A549 (cell line): ENCODE measurements at regions of chr2 and their contacts with region 1.

Region 1: GRCh38 chr2:15636972-15637785 is 45.5 kb downstream of the DDX1 start:
- DNase-seq: peak; percentile 73 to 77
- ATAC-seq: peak; percentile 90 to 94
- H3K4me3 ChIP-seq: no peak overlapping the region
- H3K27ac ChIP-seq: no peak overlapping the region
- H3K4me1 ChIP-seq: no peaks in the 10 kb centered on the region
- CTCF ChIP-seq: peak; percentile 100
- EP300 ChIP-seq: no peak
- POLR2A ChIP-seq: no peak
- RAD21 ChIP-seq: peak; percentile 98 to 100

Region 2: GRCh38 chr2:15448250-15448839 is 188.8 kb before region 1 on chr2:
- CTCF ChIA-PET with region 1: no interaction called
- POLR2A ChIA-PET with region 1: no interaction called
- DNase-seq: no peak
- ATAC-seq: no peak
- H3K4me3 ChIP-seq: no peak overlapping the region
- H3K27ac ChIP-seq: no peak overlapping the region
- H3K4me1 ChIP-seq: no peaks in the 10 kb centered on the region
- CTCF ChIP-seq: no peak
- EP300 ChIP-seq: no peak
- POLR2A ChIP-seq: no peak
- RAD21 ChIP-seq: no peak

Region 3: DNA sequence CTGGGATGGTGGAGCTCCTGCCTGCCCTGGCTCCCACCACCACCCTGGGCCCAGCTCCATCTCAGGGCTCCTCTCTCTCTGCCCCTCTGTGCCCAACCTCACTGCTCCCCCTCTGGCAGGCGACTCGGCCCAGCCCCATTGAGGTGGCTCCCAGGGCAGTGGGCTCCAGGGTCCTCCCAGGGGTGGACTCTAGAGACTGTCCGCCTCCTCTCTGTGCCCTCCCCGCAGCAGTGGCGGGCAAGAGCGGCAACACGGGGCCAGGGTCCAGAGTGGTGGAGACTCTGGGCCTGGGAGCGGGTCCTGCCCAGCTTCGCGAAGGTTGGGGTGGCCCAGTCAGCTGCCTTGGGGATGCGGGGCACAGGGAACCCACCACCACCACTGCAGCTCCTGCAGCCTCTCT is 18.1 kb before region 1 on chr2:
- CTCF ChIA-PET with region 1: interaction called, 15 read pairs
- POLR2A ChIA-PET with region 1: no interaction called
- DNase-seq: no peak
- ATAC-seq: peak; percentile 46 to 47; a peak in 3 of 6 replicates
- H3K4me3 ChIP-seq: no peak overlapping the region
- H3K27ac ChIP-seq: no peak overlapping the region
- H3K4me1 ChIP-seq: no peaks in the 10 kb centered on the region
- CTCF ChIP-seq: no peak
- EP300 ChIP-seq: no peak
- POLR2A ChIP-seq: no peak
- RAD21 ChIP-seq: no peak

Region 4: DNA sequence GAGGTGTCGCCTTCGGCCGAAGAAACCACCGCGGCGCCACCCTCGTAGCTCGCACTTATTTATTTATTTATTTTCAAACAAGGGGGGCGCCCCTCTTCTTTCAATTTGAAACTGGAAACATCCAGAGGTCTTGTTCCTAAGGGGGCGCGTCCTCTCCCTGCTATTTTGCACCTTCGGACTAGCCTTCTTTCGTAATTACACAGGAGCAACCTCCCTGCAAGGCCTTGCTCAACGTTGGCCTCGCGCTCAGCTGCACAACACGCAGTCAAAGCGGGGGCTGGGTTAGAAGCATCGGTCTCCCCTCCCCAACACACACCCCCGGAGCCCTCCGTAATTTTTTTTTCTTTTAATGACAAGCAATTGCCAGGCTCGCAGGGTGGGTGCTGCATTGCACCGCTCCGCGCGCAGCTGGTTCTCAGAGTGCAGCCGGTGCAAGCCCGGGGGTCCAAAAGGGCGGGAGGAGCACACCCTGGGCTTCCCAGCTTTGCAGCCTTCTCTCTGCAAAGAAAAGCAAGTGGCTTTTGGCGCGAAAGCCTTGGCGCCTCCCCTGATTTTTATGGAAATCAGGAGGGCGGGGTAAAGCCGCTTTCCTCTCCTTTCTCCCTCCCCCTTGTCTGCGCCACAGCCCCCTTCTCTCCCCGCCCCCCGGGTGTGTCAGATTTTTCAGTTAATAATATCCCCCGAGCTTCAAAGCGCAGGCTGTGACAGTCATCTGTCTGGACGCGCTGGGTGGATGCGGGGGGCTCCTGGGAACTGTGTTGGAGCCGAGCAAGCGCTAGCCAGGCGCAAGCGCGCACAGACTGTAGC is 302.9 kb after region 1 on chr2 and contains the start of gene MYCN:
- CTCF ChIA-PET with region 1: interaction called, 14 read pairs
- POLR2A ChIA-PET with region 1: no interaction called
- DNase-seq: peak; percentile 44 to 72
- ATAC-seq: peak; percentile 46 to 61
- H3K4me3 ChIP-seq: peak within 1 kb of the TSS; percentile 37
- H3K27ac ChIP-seq: no peak within 1 kb of the TSS
- H3K4me1 ChIP-seq: peaks cover 24% of the 10 kb centered on the region
- CTCF ChIP-seq: peak; percentile 88
- EP300 ChIP-seq: no peak
- POLR2A ChIP-seq: no peak
- RAD21 ChIP-seq: peak; percentile 88 to 95
- polyA plus RNA-seq, gene MYCN: not detected in 2 replicates

Region 5: DNA sequence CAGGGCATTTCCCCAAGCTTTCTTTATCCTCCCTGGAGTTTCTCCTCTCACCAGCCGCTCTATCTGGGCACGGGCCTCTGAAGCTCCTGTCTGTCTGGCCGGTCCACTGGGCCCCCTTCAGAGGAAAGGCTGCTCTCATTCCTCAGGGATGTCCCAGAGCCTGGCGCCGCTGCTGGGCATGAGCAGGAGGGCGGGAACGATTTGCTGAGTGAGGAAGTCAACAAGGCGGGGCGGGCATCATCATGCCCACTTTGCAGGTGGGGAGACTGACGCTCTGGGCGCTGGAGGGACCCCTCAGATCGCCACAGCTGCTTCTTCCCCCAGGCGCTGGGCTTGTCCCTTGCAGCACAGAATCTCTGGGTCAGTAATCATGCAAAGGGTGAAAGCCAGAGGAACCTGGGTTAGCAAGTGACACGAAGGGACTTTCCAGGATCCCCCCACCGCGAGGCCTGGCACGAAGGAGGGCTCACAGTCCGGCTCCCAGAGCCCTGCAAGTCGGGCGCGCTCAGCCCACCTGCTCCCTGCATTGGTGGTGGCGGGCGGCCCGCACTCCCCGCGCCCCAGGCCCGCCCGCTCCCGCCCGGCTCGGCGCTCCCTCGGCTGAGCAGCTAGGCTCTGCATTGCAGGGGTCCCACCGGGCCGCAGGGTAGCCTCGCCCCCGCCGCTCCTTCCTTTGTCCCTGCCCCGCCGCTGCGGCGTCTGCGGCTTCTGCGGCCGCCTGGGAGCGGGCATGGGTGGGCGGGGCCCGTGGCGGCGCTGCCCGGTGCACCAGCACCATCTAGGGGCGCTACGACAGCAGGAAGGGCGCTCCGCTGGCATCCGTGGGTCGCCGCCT is 870.7 kb after region 1 on chr2:
- CTCF ChIA-PET with region 1: interaction called, 63 read pairs
- POLR2A ChIA-PET with region 1: no interaction called
- DNase-seq: peak; percentile 46 to 57
- ATAC-seq: peak; percentile 96 to 99
- H3K4me3 ChIP-seq: peak overlapping the region; percentile 56
- H3K27ac ChIP-seq: peak overlapping the region in 1 of 2 experiments; percentile 54; a peak in 2 of 6 replicates
- H3K4me1 ChIP-seq: peaks cover 5% of the 10 kb centered on the region; the same call in 1 of the 3 replicates
- CTCF ChIP-seq: peak; percentile 85
- EP300 ChIP-seq: no peak
- POLR2A ChIP-seq: no peak
- RAD21 ChIP-seq: peak; percentile 81 to 97